ENCODE measurements at regions of chr4 and their contacts with region 1.

Region 1: DNA sequence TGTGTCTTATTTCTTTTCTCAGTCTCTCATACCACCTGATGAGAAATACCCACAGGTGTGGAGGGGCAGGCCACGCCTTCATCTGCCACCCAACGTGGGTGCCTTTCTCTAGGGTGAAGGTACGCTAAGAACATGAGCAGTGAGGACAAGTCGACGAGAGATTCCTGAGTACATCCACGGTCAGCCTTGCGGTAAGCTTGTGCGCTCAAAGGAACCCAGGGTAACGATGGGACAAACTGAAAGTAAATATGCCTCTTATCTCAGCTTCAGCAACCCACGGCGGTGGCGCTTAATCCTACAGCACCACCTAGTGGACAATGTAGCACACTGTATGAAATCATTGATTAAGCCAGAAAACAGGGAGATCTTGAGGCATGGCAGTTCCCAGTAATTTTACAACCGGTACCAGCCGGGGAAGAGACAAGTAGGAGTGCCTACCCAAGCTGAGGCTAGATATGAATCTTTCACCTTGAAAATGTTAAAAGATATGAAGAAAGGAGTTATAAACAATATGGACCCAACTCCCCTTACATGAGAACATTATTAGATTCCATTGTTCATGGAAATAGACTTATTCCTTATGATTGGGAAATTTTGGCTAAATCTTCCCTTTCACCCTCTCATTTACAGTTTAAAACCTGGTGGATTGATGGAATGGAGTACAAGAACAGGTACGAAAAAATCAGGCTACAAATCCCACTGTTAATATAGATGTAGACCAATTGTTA is 63.0 kb downstream of the ZNF732 start:
- DNase-seq: peak; percentile 84
- H3K4me3 ChIP-seq: peak overlapping the region; percentile 33 to 47 (median 44)
- H3K27ac ChIP-seq: peak overlapping the region; percentile 20 to 56 (median 47)
- H3K4me1 ChIP-seq: peaks cover 0 to 11% (median 9%) of the 10 kb centered on the region in 4 donors
- H3K27me3 ChIP-seq: no peaks in the 10 kb centered on the region
- CTCF ChIP-seq: peak; percentile 78 to 90 (median 80)
- EP300 ChIP-seq: no peak
- POLR2A ChIP-seq: no peak

Region 2: DNA sequence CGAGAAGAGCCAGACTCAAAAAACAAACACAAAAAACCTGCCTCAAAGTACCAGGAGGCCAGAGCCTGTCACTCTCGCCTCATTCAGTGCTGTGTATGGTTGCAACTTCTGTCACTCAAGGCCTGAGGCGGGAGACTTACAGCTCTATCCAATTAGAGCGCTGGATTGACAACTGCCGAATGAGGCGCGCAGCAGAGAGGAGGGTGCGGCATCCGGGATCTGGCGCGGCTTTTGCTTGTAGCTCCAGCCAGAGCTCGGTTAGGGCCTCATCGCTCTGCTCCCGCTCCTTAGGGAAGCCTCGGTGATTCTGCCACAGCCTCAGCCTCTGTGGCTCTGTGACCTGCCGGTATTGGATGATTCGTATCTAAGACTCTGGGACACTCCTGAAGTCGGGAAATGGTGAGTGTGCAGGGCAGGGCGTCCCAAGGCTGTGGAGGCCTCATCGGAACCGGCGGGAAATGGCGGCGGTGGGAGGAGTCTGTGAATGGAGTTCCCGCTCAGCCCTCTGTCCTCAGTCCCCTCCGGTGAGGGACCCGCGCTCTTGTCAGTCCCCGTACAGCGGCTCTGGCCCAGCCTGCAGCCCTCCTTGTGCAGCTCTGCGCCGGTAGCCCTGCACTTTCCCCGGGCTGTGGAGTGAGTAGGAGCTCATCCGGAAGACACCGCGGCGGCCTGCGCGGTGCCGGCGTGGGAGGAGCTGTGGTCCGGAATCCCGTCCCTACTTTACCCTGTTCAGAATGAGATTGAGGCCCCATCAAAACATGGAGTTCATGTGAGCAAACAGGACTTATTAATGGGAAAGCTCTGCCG is 117.8 kb before region 1 on chr4 and contains the start of gene ZNF718:
- intact Hi-C with region 1: loop called (anchors 5 kb)
- DNase-seq: peak; percentile 97
- H3K4me3 ChIP-seq: peak within 1 kb of the TSS; percentile 71 to 85 (median 81)
- H3K27ac ChIP-seq: peak within 1 kb of the TSS; percentile 88 to 90 (median 89)
- H3K4me1 ChIP-seq: peaks cover 0 to 13% (median 11%) of the 10 kb centered on the region in 4 donors
- H3K27me3 ChIP-seq: no peaks in the 10 kb centered on the region
- CTCF ChIP-seq: no peak
- EP300 ChIP-seq: no peak
- POLR2A ChIP-seq: peak; percentile 68 to 72
- total RNA-seq, gene ZNF718: 7.7 to 13.2 (median 8.6) TPM

Region 3: DNA sequence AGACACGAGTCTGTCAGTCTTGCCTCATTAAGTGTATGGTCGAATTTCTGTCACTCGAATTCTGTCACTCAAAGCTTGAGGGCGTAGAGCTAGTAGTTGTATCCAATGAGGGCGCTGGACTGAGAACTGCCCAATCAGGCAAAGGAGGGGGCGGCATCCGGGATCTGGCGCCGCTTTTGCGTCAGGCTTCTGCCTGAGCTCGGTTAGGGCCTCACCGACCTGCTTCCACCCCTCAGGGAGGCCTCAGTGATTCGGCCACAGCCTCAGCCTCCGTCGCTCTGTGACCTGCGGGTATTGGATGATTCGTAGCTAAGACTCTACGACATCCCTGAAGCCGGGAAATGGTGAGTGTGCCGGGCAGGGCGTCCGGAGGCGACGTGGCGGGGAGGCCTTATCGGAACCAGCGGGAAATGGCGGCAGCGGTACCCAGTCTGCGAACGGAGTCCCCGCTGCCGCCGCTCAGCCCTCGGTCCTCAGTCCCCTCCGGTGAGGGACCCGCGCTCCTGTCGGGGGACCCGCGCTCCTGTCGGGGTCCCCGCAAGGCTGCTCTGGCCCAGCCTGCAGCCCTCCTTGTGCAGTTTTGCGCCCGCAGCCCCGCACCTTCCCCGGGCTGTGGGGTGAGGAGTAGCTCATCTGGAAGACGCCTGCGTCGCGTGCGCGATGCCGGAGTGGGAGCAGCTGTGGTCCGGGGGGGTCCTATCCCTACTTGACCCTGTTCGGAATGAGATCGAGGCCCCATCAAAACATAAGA is 29.7 kb before region 1 on chr4:
- intact Hi-C with region 1: loop called (anchors 2 kb)
- DNase-seq: peak; percentile 88
- H3K4me3 ChIP-seq: peak overlapping the region; percentile 55 to 73 (median 67)
- H3K27ac ChIP-seq: peak overlapping the region; percentile 78 to 86 (median 84)
- H3K4me1 ChIP-seq: peaks cover 0 to 11% (median 8%) of the 10 kb centered on the region in 4 donors
- H3K27me3 ChIP-seq: no peaks in the 10 kb centered on the region
- CTCF ChIP-seq: no peak
- EP300 ChIP-seq: no peak
- POLR2A ChIP-seq: peak in 1 of 2 donors; percentile 44

Region 4: GRCh38 chr4:337143-337931 is 95.1 kb after region 1 on chr4 and contains the start of gene ZNF141:
- intact Hi-C with region 1: loop called (anchors 5 kb)
- DNase-seq: peak; percentile 99
- H3K4me3 ChIP-seq: peak within 1 kb of the TSS; percentile 77 to 97 (median 90)
- H3K27ac ChIP-seq: peak within 1 kb of the TSS; percentile 88 to 99 (median 98)
- H3K4me1 ChIP-seq: peaks cover 0 to 28% (median 18%) of the 10 kb centered on the region in 4 donors
- H3K27me3 ChIP-seq: no peaks in the 10 kb centered on the region
- CTCF ChIP-seq: no peak
- EP300 ChIP-seq: peak in 3 of 4 donors; percentile 75 to 82 (median 76)
- POLR2A ChIP-seq: peak; percentile 69 to 89
- total RNA-seq, gene ZNF141: 17.4 to 24.4 (median 23.2) TPM

Region 5: DNA sequence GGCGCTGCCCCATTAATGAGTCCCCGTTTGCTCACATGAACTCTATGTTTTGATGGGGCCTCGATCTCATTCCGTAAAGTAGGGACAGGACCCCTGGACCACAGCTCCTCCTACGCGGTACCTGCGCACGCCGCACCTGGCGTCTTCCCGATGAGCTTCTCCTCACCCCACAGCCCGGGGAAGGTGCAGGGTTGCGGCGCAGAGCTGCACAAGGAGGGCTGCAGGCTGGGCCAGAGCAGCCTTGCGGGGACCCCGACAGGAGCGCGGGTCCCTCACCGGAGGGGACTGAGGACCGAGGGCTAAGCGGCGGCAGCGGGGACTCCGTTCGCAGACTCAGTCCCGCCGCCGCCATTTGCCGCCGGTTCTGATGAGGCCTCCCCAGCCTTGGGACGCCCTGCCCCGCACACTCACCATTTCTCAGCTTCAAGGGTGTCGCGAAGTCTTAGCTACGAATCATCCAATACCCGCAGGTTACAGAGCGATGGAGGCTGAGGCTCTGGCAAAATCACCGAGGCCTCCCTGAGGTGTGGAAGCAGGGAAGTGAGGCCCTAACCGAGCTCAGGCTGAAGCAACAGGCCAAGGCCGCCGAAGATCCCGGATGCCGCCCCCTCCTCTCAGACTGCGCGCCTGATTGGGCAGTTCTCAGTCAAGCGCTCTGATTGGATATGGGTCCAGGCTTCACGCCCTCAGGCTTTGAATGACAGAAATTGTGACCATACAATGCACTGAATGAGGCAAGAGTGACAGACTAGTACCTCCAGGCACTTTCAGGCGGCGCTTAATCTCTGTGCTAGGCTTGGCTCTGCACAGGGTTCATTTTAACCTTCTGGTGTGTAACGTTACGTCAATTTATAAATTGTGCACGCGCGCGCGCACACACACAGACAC is 231.5 kb after region 1 on chr4:
- intact Hi-C with region 1: loop called (anchors 10 kb)
- DNase-seq: peak; percentile 98
- H3K4me3 ChIP-seq: peak overlapping the region; percentile 77 to 99 (median 92)
- H3K27ac ChIP-seq: peak overlapping the region; percentile 86 to 92 (median 90)
- H3K4me1 ChIP-seq: peaks cover 0 to 25% (median 17%) of the 10 kb centered on the region in 4 donors
- H3K27me3 ChIP-seq: no peaks in the 10 kb centered on the region
- CTCF ChIP-seq: no peak
- EP300 ChIP-seq: no peak
- POLR2A ChIP-seq: peak; percentile 56 to 63

Measured in sigmoid colon (tissue), 7 donors.